AG04450 (cell line): ENCODE measurements at regions of chr11 and their contacts with region 1.

Region 1: GRCh38 chr11:130390071-130390758 is 38.2 kb downstream of the ADAMTS8 start:
- DNase-seq: peak; percentile 97
- H3K4me3 ChIP-seq: no peak overlapping the region
- H3K27ac ChIP-seq: peak overlapping the region; percentile 62
- H3K27me3 ChIP-seq: peaks cover 20% of the 10 kb centered on the region
- CTCF ChIP-seq: peak; percentile 79

Region 2: DNA sequence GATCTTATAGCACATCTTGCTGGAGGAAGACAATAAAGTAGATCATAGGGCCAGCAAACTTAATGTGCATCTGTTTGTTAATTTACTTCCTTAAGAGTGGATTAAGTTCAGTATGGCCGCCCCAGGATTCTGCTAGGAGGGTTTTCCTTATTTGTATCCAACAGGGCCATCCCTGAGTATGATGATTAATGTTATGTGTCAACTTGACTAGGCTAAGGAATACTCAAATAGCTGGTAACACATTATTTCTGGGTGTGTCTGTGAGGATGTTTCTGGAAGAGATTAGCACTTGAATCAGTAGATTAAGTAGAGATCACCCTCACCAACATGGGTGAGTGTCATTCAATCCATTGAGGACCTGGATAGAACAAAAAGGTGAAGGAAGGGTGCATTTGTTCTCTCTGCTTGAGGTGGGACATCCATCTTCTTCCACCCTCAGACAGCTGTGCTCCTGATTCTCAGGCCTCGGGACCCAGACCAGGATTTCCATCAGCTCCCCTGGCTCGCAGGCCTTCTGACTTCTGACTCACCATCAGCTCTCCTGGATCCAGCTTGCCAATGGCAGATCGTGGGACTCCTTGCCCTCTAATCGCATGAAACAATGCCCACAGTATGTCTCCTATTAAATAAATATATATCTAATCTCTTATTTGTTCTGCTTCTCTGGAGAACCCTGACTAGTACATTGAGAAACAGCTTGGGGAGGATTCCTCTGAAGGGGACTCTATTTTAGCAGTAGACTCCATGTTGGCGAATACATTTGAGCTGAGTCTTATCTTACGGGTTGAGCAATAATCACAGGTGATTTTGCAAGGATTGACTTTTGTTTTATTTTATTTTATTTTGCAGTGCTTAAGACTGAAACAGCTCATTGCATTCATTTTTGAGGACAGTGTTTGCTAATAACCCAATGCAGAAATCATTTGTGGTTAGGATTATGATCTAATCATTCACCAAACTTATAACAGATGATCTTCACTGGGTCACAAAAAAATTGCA is 66.5 kb before region 1 on chr11:
- CTCF ChIA-PET with region 1: no interaction called
- POLR2A ChIA-PET with region 1: no interaction called
- DNase-seq: no peak
- H3K4me3 ChIP-seq: no peak overlapping the region
- H3K27ac ChIP-seq: no peak overlapping the region
- H3K27me3 ChIP-seq: no peaks in the 10 kb centered on the region
- CTCF ChIP-seq: no peak

Region 3: GRCh38 chr11:130403271-130403804 is 13.1 kb after region 1 on chr11:
- CTCF ChIA-PET with region 1: interaction called, 9 read pairs
- POLR2A ChIA-PET with region 1: interaction called, 27 read pairs
- DNase-seq: peak; percentile 90
- H3K4me3 ChIP-seq: peak overlapping the region; percentile 46
- H3K27ac ChIP-seq: peak overlapping the region; percentile 97
- H3K27me3 ChIP-seq: no peaks in the 10 kb centered on the region
- CTCF ChIP-seq: no peak